B cell (primary cell): ENCODE measurements at regions of chr19 and their contacts with region 1.

Region 1: GRCh38 chr19:44954824-44955586 is at the start of gene CLPTM1:
- DNase-seq: peak; percentile 98
- ATAC-seq: peak; percentile 88
- H3K4me3 ChIP-seq: peak within 1 kb of the TSS; percentile 96 to 100 (median 98)
- H3K4me3 Mint-ChIP-seq: peak within 1 kb of the TSS; percentile 99
- H3K27ac ChIP-seq: peak within 1 kb of the TSS; percentile 90 to 93
- H3K27ac Mint-ChIP-seq: peak within 1 kb of the TSS; percentile 94
- H3K4me1 ChIP-seq: peaks cover 48 to 57% of the 10 kb centered on the region in 2 donors
- H3K4me1 Mint-ChIP-seq: peaks cover 58% of the 10 kb centered on the region
- H3K27me3 ChIP-seq: no peaks in the 10 kb centered on the region
- H3K27me3 Mint-ChIP-seq: no peaks in the 10 kb centered on the region
- CTCF ChIP-seq: no peak
- total RNA-seq, gene CLPTM1: 121 and 123 TPM in 2 replicates

Region 2: GRCh38 chr19:44770550-44771257 is 184.3 kb before region 1 on chr19:
- CTCF ChIA-PET with region 1: interaction called, 5 read pairs
- POLR2A ChIA-PET with region 1: no interaction called
- intact Hi-C with region 1: loop called (anchors 5 kb)
- DNase-seq: peak; percentile 98
- ATAC-seq: peak; percentile 100
- H3K4me3 ChIP-seq: peak overlapping the region in 3 of 5 experiments; percentile 8 to 32 (median 18)
- H3K4me3 Mint-ChIP-seq: peak overlapping the region; percentile 63
- H3K27ac ChIP-seq: no peak overlapping the region
- H3K27ac Mint-ChIP-seq: peak overlapping the region; percentile 74
- H3K4me1 ChIP-seq: peaks cover 8 to 20% of the 10 kb centered on the region in 2 donors
- H3K4me1 Mint-ChIP-seq: peaks cover 28% of the 10 kb centered on the region
- H3K27me3 ChIP-seq: no peaks in the 10 kb centered on the region
- H3K27me3 Mint-ChIP-seq: no peaks in the 10 kb centered on the region
- CTCF ChIP-seq: peak; percentile 76

Region 3: DNA sequence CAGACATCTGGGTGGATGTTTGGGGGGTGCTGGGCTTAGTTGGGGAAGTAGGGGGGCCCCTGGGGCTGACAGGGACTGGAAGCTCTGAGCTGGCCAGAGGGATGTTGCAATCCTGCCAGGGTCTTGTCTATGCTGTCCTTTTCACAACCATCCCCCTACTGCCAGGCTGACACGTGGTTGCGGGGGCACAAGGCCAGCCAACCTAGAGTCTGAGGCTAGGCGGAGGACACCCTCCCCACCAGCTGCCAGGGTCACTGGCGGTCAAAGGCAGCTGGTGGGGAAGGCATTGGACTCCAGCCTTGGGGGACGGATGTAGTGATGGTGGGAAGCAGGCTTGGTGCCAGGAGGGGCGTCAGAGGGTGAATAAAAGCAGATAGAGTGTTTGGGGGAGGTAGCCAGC is 42.2 kb before region 1 on chr19:
- CTCF ChIA-PET with region 1: interaction called, 5 read pairs
- POLR2A ChIA-PET with region 1: interaction called, 10 read pairs
- intact Hi-C with region 1: loop called (anchors 1 kb)
- DNase-seq: no peak
- ATAC-seq: no peak
- H3K4me3 ChIP-seq: no peak overlapping the region
- H3K4me3 Mint-ChIP-seq: no peak overlapping the region
- H3K27ac ChIP-seq: no peak overlapping the region
- H3K27ac Mint-ChIP-seq: no peak overlapping the region
- H3K4me1 ChIP-seq: peaks cover 7 to 13% of the 10 kb centered on the region in 2 donors
- H3K4me1 Mint-ChIP-seq: peaks cover 9% of the 10 kb centered on the region
- H3K27me3 ChIP-seq: peaks cover 0 to 21% (median 2%) of the 10 kb centered on the region in 4 experiments
- H3K27me3 Mint-ChIP-seq: peaks cover 26% of the 10 kb centered on the region
- CTCF ChIP-seq: no peak

Region 4: DNA sequence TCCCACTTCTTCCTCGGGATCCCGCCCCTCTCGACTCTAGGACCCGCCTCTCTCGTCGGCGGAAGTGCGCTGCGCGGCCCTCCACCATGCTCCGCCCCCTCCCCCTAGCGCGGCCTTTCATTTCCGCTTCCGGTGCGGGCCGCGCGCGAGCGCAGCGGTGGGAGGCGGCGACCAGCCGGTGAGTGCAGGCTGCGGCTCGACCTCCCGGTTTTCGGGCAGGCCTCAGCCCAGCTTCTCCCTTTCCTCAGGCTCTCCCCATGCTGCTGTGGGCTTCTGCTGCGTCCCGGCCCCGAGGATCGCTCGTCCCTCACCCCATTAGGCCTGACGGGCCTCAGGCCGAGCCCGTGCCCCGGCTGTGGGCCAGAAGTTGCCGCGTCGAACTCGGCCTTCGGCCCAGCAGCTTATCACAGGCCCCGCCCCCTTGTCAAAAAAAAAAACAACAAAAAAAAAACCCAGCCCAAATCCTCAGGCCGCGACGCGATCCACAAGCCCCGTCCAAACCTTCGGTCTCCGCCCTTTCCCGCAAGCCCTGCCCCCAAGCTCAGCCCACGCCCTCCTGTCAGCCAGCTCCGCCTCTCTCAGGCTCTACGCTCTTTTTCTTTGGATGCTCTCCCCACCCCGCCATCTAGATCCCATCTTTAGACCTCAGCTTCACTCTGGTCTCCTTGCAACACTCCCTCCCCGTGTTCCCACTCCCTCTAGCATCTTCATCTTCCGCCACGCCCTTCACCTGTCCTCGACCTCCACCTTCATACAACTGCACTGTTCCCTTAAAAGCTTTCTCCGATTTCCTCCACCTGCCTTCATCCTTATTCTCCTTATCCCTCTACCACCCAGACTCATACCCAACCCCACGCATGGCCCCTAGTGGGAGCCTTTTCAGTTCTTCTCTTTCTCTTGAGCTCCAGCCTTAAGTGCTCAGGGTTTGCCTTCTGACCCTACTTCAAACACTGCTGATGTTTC is 84.2 kb after region 1 on chr19 and contains the start of gene CLASRP:
- CTCF ChIA-PET with region 1: interaction called, 3 read pairs
- POLR2A ChIA-PET with region 1: no interaction called
- intact Hi-C with region 1: loop called (anchors 1 kb)
- DNase-seq: peak; percentile 93
- ATAC-seq: peak; percentile 89
- H3K4me3 ChIP-seq: peak within 1 kb of the TSS; percentile 51 to 96 (median 94)
- H3K4me3 Mint-ChIP-seq: peak within 1 kb of the TSS; percentile 96
- H3K27ac ChIP-seq: peak within 1 kb of the TSS; percentile 93 to 96
- H3K27ac Mint-ChIP-seq: peak within 1 kb of the TSS; percentile 96
- H3K4me1 ChIP-seq: peaks cover 26 to 35% of the 10 kb centered on the region in 2 donors
- H3K4me1 Mint-ChIP-seq: peaks cover 40% of the 10 kb centered on the region
- H3K27me3 ChIP-seq: no peaks in the 10 kb centered on the region
- H3K27me3 Mint-ChIP-seq: no peaks in the 10 kb centered on the region
- CTCF ChIP-seq: no peak
- total RNA-seq, gene CLASRP: 277 and 285 TPM in 2 replicates

Region 5: GRCh38 chr19:45092747-45093678 is 138.0 kb after region 1 on chr19 and contains the start of gene PPP1R37:
- CTCF ChIA-PET with region 1: interaction called, 7 read pairs
- POLR2A ChIA-PET with region 1: interaction called, 3 read pairs
- intact Hi-C with region 1: loop called (anchors 1 kb)
- DNase-seq: peak; percentile 97
- ATAC-seq: peak; percentile 67
- H3K4me3 ChIP-seq: peak within 1 kb of the TSS; percentile 79 to 93 (median 91)
- H3K4me3 Mint-ChIP-seq: peak within 1 kb of the TSS; percentile 95
- H3K27ac ChIP-seq: peak within 1 kb of the TSS; percentile 81 to 98
- H3K27ac Mint-ChIP-seq: peak within 1 kb of the TSS; percentile 99
- H3K4me1 ChIP-seq: peaks cover 22 to 44% of the 10 kb centered on the region in 2 donors
- H3K4me1 Mint-ChIP-seq: peaks cover 62% of the 10 kb centered on the region
- H3K27me3 ChIP-seq: no peaks in the 10 kb centered on the region
- H3K27me3 Mint-ChIP-seq: no peaks in the 10 kb centered on the region
- CTCF ChIP-seq: peak; percentile 52
- total RNA-seq, gene PPP1R37: 28.1 and 37.3 TPM in 2 replicates